ENCODE measurements at regions of chr6 and their contacts with region 1.

Region 1: GRCh38 chr6:132962936-132963868 is 148.8 kb downstream of the RPS12 start:
- DNase-seq: no peak
- H3K4me3 ChIP-seq: no peak overlapping the region
- H3K27ac ChIP-seq: no peak overlapping the region
- H3K4me1 ChIP-seq: no peaks in the 10 kb centered on the region
- H3K27me3 ChIP-seq: no peaks in the 10 kb centered on the region
- CTCF ChIP-seq: peak in 3 of 4 experiments; percentile 35 to 70 (median 40)
- EP300 ChIP-seq: no peak
- POLR2A ChIP-seq: no peak

Region 2: DNA sequence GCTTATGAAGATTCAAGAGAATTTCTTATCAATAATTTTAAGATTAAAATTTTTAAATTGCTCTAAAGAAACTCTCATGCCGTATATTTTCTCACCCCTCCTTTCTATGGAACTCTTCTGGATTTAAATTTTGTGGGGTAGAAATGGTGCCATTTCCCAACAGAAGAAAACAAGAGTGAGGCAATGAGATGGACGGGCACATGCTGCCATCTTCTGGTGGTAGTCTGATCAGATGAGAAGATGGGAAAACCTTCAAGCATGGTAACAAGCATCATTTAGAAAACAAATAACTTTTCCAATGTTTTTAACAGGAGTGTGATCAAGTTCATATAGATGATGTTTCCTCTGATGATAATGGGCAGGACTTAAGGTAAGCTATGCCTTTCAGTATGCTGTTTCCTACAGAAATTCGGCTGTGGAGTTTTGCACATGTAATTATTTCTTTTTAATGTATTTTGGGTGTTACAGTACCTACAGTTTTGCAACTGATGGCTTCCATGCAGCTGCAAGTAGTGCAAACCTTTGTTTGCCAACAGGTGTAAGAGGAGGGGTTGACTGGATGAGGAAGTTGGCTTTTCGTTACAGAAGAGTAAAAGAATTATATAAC is 549.3 kb after region 1 on chr6:
- intact Hi-C with region 1: loop called (anchors 2 kb)
- DNase-seq: no peak
- H3K4me3 ChIP-seq: no peak overlapping the region
- H3K27ac ChIP-seq: no peak overlapping the region
- H3K4me1 ChIP-seq: no peaks in the 10 kb centered on the region
- H3K27me3 ChIP-seq: no peaks in the 10 kb centered on the region
- CTCF ChIP-seq: peak in 3 of 4 experiments; percentile 7 to 51 (median 32)
- EP300 ChIP-seq: no peak
- POLR2A ChIP-seq: no peak